T-cell (primary cell): ENCODE measurements at regions of chrX and their contacts with region 1.

Region 1: DNA sequence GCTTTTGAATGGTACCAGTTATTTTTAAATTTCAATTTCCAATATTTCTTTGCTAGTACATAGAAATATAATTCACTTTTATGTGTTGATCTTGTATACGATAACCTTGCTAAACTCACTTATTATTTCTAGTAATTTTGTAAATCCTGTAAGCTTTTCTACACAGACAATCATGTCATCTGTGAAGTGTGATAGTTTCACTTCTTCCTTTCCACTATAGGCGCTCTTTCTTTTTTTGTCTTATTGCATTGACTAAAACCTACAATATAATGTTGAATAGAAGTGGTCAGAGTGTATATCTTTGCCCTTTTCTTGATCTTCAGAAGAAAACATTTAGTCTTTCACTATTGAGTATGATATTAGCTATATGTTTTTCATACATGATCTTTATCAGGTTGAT is 76.6 kb downstream of the ZNF182 start:
- DNase-seq: no peak
- ATAC-seq: no peak
- H3K4me3 ChIP-seq: no peak overlapping the region
- H3K4me3 Mint-ChIP-seq: no peak overlapping the region
- H3K27ac ChIP-seq: no peak overlapping the region
- H3K27ac Mint-ChIP-seq: no peak overlapping the region
- H3K4me1 ChIP-seq: no peaks in the 10 kb centered on the region
- H3K4me1 Mint-ChIP-seq: peaks cover 0 to 2% (median 0%) of the 10 kb centered on the region in 3 donors
- H3K27me3 ChIP-seq: no peaks in the 10 kb centered on the region
- H3K27me3 Mint-ChIP-seq: no peaks in the 10 kb centered on the region

Region 2: GRCh38 chrX:47831788-47832187 is 95.4 kb before region 1 on chrX:
- CTCF ChIA-PET with region 1: interaction called in 1 of 2 experiments, 10 read pairs
- POLR2A ChIA-PET with region 1: no interaction called
- DNase-seq: peak in 33 of 35 experiments; percentile 5 to 73 (median 35)
- ATAC-seq: peak in 1 of 4 experiments; percentile 36
- H3K4me3 ChIP-seq: no peak overlapping the region
- H3K4me3 Mint-ChIP-seq: no peak overlapping the region
- H3K27ac ChIP-seq: no peak overlapping the region
- H3K27ac Mint-ChIP-seq: no peak overlapping the region
- H3K4me1 ChIP-seq: peaks cover 0 to 11% of the 10 kb centered on the region in 2 experiments
- H3K4me1 Mint-ChIP-seq: peaks cover 6 to 10% (median 9%) of the 10 kb centered on the region in 3 donors
- H3K27me3 ChIP-seq: no peaks in the 10 kb centered on the region
- H3K27me3 Mint-ChIP-seq: peaks cover 0 to 5% of the 10 kb centered on the region in 2 donors

Region 3: DNA sequence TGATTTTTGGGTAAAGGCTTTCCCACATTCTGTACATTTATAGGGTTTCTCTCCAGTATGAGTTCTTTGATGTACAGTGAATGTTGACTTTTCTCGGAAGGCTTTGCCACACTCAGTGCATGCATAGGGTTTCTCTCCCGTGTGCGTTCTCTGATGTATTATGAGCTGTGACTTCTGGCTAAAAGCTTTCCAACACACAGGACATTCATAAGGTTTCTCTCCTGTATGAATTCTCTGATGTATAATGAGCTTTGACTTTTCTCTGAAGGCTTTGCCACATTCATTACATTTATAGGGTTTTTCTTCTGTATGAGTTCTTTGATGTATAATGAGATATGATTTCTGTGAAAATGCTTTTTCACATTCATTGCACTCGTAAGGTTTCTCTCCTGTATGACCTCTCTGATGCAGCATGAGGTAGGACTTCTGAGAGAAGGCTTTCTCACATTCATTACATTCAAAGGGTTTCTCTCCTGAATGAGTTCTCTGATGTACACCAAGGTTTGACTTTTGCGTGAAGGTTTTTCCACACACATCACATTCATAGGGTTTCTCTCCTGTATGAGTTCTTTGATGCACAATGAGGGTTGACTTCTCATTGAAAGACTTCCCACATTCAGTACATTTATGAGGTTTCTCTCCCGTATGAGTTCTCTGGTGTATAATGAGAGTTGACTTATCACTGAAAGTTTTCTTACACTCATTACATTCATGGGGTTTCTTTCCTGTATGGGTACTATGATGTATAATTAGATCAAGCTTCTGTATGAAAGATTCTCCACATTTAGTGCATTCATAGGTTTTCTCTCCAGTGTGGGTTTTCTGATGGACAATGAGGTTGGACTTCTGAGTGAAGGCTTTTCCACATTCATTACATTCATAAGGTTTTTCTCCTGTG is 49.3 kb after region 1 on chrX:
- CTCF ChIA-PET with region 1: no interaction called
- POLR2A ChIA-PET with region 1: no interaction called
- DNase-seq: no peak
- ATAC-seq: no peak
- H3K4me3 ChIP-seq: no peak overlapping the region
- H3K4me3 Mint-ChIP-seq: no peak overlapping the region
- H3K27ac ChIP-seq: no peak overlapping the region
- H3K27ac Mint-ChIP-seq: no peak overlapping the region
- H3K4me1 ChIP-seq: no peaks in the 10 kb centered on the region
- H3K4me1 Mint-ChIP-seq: no peaks in the 10 kb centered on the region
- H3K27me3 ChIP-seq: no peaks in the 10 kb centered on the region
- H3K27me3 Mint-ChIP-seq: peaks cover 0 to 8% of the 10 kb centered on the region in 2 donors